H1 (cell line): ENCODE measurements at regions of chr1 and their contacts with region 1.

Region 1: DNA sequence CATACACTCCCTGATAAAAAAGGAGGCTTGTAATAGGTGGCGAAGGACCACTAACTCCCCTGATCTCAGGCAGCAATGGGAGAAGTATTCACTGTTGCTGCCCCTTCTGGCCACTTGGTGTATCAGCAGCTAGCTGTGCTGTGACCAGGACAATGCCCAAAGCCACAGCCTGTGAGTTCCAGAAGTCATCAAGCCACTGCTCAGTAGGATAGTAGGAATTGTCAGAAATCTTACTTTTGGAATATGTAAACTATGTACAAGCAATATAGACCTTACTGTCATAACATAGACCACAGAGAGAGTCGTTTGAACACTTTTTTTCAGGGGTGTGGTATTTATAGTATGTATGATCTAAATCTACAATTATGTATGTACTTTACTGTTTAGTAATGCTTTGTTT is 248.3 kb upstream of the CAMK1G start:
- DNase-seq: peak in 1 of 2 experiments; percentile 33
- H3K4me3 ChIP-seq: no peak overlapping the region
- H3K27ac ChIP-seq: no peak overlapping the region
- H3K4me1 ChIP-seq: peaks cover 0 to 3% (median 0%) of the 10 kb centered on the region in 4 experiments; a peak in 1 of 7 replicates
- H3K27me3 ChIP-seq: no peaks in the 10 kb centered on the region
- CTCF ChIP-seq: peak; percentile 67 to 93 (median 88)
- EP300 ChIP-seq: no peak
- POLR2A ChIP-seq: no peak
- RAD21 ChIP-seq: peak; percentile 59 to 69; a peak in 3 of 4 replicates

Region 2: GRCh38 chr1:209190591-209191261 is 144.5 kb before region 1 on chr1:
- CTCF ChIA-PET with region 1: no interaction called
- POLR2A ChIA-PET with region 1: no interaction called
- DNase-seq: peak; percentile 68 to 84
- H3K4me3 ChIP-seq: no peak overlapping the region
- H3K27ac ChIP-seq: no peak overlapping the region
- H3K4me1 ChIP-seq: peaks cover 0 to 12% (median 6%) of the 10 kb centered on the region in 4 experiments; a peak in 4 of 7 replicates
- H3K27me3 ChIP-seq: no peaks in the 10 kb centered on the region
- CTCF ChIP-seq: peak; percentile 89 to 98 (median 95)
- EP300 ChIP-seq: no peak
- POLR2A ChIP-seq: no peak
- RAD21 ChIP-seq: peak; percentile 94 to 95

Region 3: GRCh38 chr1:209291715-209292114 is 43.5 kb before region 1 on chr1:
- CTCF ChIA-PET with region 1: interaction called, 10 read pairs
- POLR2A ChIA-PET with region 1: no interaction called
- DNase-seq: no peak
- H3K4me3 ChIP-seq: no peak overlapping the region
- H3K27ac ChIP-seq: no peak overlapping the region
- H3K4me1 ChIP-seq: peaks cover 0 to 3% (median 0%) of the 10 kb centered on the region in 4 experiments; a peak in 1 of 7 replicates
- H3K27me3 ChIP-seq: no peaks in the 10 kb centered on the region
- CTCF ChIP-seq: no peak
- EP300 ChIP-seq: no peak
- POLR2A ChIP-seq: no peak
- RAD21 ChIP-seq: no peak

Region 4: GRCh38 chr1:209318181-209319056 is 16.8 kb before region 1 on chr1:
- CTCF ChIA-PET with region 1: interaction called, 19 read pairs
- POLR2A ChIA-PET with region 1: no interaction called
- DNase-seq: no peak
- H3K4me3 ChIP-seq: no peak overlapping the region
- H3K27ac ChIP-seq: no peak overlapping the region
- H3K4me1 ChIP-seq: no peaks in the 10 kb centered on the region
- H3K27me3 ChIP-seq: no peaks in the 10 kb centered on the region
- CTCF ChIP-seq: no peak
- EP300 ChIP-seq: no peak
- POLR2A ChIP-seq: no peak
- RAD21 ChIP-seq: no peak